ENCODE measurements at regions of chr9 and their contacts with region 1.

Region 1: GRCh38 chr9:6681147-6681956 is 35.8 kb upstream of the GLDC start:
- DNase-seq: peak; percentile 96
- ATAC-seq: peak; percentile 88
- H3K4me3 Mint-ChIP-seq: peak overlapping the region; percentile 88
- H3K27ac Mint-ChIP-seq: peak overlapping the region; percentile 99
- H3K4me1 Mint-ChIP-seq: peaks cover 19% of the 10 kb centered on the region
- H3K27me3 Mint-ChIP-seq: no peaks in the 10 kb centered on the region

Region 2: GRCh38 chr9:6584881-6585597 is 96.3 kb before region 1 on chr9:
- CTCF ChIA-PET with region 1: interaction called, 4 read pairs
- POLR2A ChIA-PET with region 1: no interaction called
- intact Hi-C with region 1: loop called in 1 of 2 experiments (anchors 5 kb)
- DNase-seq: no peak
- ATAC-seq: no peak
- H3K4me3 Mint-ChIP-seq: no peak overlapping the region
- H3K27ac Mint-ChIP-seq: no peak overlapping the region
- H3K4me1 Mint-ChIP-seq: no peaks in the 10 kb centered on the region
- H3K27me3 Mint-ChIP-seq: peaks cover 3% of the 10 kb centered on the region

Region 3: DNA sequence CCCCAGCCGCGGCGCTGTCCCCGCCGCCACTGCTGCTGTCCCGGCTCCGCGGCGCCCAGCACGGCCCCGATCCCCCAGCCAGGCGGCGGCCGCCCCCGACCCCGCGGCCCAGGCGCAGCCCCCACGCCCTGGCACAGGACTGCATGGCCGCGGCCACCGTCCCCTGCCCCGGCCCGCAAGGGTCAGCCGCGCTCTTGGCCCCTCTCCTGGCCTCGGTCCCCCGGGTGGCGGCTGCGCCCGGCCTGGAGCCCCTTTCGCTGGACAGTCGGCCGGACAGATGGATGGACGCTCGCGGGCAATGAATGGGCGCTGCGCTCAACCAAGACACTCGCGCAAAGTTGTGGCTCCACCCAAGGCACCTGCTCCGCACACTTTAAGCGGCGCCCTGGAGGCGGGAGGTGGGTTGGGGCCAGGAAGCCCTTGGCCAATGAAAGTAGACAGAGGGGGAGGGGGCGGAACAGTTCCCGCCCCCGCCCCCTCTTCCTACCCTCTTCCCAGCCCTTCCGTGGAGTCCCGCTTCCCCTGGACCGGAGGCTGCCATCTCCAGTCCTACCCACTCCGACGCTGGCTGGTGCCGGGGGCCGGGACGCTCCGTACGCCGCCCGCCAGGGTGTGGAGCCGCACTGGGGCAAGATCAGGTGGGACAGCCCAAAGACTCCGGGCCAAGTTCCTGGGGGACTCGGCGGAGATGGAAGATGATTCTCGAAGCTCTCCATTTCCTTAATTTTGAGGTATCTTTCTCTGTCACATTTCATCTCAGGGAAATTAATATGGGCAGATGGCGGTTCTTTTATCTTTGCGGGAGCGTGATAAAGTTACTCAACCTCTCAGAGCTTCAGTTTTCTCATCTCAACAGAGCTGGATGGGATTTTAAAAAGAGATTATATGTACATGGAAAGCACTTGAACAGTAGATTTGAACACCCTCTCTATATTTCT is 35.7 kb before region 1 on chr9 and contains the start of gene GLDC:
- CTCF ChIA-PET with region 1: no interaction called
- POLR2A ChIA-PET with region 1: no interaction called
- intact Hi-C with region 1: loop called in 1 of 2 experiments (anchors 1 kb)
- DNase-seq: peak; percentile 68
- ATAC-seq: peak; percentile 70
- H3K4me3 Mint-ChIP-seq: peak within 1 kb of the TSS; percentile 71
- H3K27ac Mint-ChIP-seq: peak within 1 kb of the TSS; percentile 47
- H3K4me1 Mint-ChIP-seq: peaks cover 17% of the 10 kb centered on the region
- H3K27me3 Mint-ChIP-seq: peaks cover 57% of the 10 kb centered on the region
- total RNA-seq, gene GLDC: 0.95 to 1.8 TPM

Region 4: GRCh38 chr9:6715755-6716643 is 34.6 kb after region 1 on chr9:
- CTCF ChIA-PET with region 1: no interaction called
- POLR2A ChIA-PET with region 1: interaction called, 6 read pairs
- intact Hi-C with region 1: loop called in 1 of 2 experiments (anchors 1 kb)
- DNase-seq: peak; percentile 83
- ATAC-seq: peak; percentile 91
- H3K4me3 Mint-ChIP-seq: peak overlapping the region; percentile 76
- H3K27ac Mint-ChIP-seq: peak overlapping the region; percentile 86
- H3K4me1 Mint-ChIP-seq: peaks cover 6% of the 10 kb centered on the region
- H3K27me3 Mint-ChIP-seq: no peaks in the 10 kb centered on the region

Region 5: GRCh38 chr9:7707934-7708333 is 1026.6 kb after region 1 on chr9:
- CTCF ChIA-PET with region 1: no interaction called
- POLR2A ChIA-PET with region 1: no interaction called
- intact Hi-C with region 1: no loop called
- DNase-seq: no peak
- ATAC-seq: no peak
- H3K4me3 Mint-ChIP-seq: no peak overlapping the region
- H3K27ac Mint-ChIP-seq: no peak overlapping the region
- H3K4me1 Mint-ChIP-seq: no peaks in the 10 kb centered on the region
- H3K27me3 Mint-ChIP-seq: no peaks in the 10 kb centered on the region